ENCODE measurements at regions of chr1 and their contacts with region 1.

Region 1: DNA sequence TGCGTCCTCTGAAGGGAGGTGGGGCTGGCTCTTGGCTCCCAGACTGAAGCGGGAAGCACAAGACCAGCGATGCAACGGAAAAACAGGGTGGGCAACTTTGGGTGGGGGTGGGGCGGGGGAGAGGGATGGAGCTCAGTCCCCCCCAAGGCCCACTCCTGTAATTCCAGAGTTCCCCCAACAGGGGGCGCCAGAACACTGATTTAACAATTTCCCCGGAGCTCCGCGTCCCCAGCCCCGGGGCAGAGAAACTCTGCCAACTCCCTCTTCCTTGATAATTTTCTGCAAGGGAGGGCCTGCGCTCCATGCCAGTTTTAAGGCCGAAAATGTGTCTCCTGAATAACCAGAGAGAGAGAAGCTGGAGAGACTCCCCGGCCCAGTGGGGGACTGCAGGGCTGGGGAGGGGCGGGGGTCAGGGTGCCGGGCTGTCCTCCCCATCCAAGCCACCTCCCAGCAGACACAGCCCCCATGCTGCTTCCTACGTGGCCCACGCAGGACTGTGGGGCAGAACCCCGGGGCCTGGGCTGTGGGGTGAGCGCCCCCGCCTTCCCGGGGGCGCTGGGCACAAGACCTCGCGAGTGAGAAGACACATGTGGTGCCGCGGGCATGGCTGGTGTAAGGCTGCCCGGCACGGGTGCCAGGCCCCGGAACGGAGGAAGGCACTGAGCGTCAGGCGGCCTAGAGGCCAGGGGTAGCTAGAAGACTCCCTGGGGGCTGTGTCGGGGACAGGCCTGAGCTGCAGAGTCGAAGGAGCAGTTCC is 51.4 kb downstream of the KIF21B start:
- DNase-seq: peak; percentile 63
- ATAC-seq: peak; percentile 46

Region 2: DNA sequence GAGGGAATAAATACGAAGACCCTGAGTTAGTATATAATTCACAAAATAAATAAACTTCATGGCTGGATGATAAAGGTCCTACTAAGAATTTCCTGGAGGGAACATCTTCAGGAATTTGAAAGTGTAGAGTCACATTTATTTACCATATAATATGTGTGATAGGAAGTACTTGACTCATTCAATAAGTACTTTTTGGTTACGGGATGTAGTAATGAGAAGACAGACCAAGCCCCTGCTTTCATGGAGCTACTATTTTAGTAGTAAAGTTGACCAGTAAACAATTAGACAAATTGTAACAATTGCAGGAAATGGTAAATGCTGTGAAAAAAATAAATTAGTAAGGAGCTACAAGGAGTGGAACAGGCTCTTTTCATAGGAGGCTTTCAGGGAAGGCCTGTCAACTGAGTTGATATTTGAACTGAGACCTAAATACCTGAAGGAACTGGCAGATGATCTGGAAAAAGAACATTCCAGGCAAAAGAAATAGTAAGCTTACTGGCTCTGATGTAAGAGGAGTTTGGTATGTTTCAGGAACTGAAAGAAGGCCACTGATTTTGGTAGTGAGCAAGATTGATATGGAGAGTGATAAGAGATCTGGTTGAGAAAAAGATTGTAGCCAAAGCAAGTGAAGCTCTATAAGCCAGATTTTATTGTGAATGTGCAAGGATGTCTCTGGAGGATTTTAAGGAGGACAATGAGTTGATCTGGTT is 197.2 kb before region 1 on chr1:
- intact Hi-C with region 1: loop called (anchors 10 kb)
- DNase-seq: no peak
- ATAC-seq: no peak

Region 3: GRCh38 chr1:201042779-201043461 is 70.8 kb after region 1 on chr1:
- intact Hi-C with region 1: loop called (anchors 5 kb)
- DNase-seq: peak; percentile 69
- ATAC-seq: peak; percentile 84

Region 4: DNA sequence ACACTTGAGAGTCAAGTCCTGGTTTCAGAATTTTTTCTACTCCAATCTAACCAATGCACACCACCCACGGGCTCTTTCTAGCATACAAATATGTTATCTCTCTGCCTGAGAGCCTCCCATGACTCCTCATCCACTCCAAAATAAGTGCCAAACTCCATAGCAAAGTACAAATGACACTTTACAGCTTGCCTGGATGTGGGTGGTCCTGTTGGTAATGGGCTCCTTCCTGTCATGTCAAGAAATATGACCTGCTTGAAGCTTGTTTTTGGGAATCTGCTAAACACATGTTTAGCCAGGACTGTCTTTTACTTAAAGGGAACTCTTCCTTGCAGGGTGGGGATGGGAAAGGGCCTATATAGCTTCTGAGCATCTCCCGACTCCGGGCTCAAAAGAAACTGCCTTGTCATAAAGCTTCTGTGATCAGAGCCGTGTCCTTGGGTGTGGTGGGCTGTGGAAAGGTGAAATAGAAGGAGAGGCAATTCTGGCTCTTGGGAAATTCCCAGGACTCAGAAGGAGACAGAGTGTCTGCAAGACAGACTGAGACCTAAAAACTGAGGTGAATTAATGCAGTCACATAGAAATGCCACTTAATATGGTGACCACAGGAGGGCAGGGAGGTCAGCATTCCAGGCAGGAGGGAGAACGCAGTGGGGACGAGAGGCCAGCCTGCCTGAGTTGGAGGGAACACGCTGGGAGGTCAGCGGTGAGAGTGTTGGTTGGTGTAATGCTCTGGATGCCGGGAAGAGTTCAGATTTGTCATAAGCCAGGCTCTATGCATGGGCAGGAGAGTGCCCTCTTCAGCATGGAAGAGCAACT is 212.4 kb after region 1 on chr1:
- intact Hi-C with region 1: no loop called
- DNase-seq: no peak
- ATAC-seq: peak; percentile 82

Measured in left ventricle myocardium superior (tissue), 1 donor.